ENCODE measurements at regions of chr10 and their contacts with region 1.

Region 1: GRCh38 chr10:69639291-69640195 is 9.5 kb downstream of the FAM241B start:
- DNase-seq: peak; percentile 80
- ATAC-seq: peak; percentile 75
- H3K4me3 Mint-ChIP-seq: no peak overlapping the region
- H3K27ac Mint-ChIP-seq: no peak overlapping the region
- H3K4me1 Mint-ChIP-seq: no peaks in the 10 kb centered on the region
- H3K27me3 Mint-ChIP-seq: no peaks in the 10 kb centered on the region
- CTCF ChIP-seq: peak; percentile 88

Region 2: GRCh38 chr10:69425511-69426298 is 213.8 kb before region 1 on chr10:
- CTCF ChIA-PET with region 1: no interaction called
- POLR2A ChIA-PET with region 1: no interaction called
- intact Hi-C with region 1: loop called (anchors 10 kb)
- DNase-seq: no peak
- ATAC-seq: peak; percentile 21
- H3K4me3 Mint-ChIP-seq: no peak overlapping the region
- H3K27ac Mint-ChIP-seq: no peak overlapping the region
- H3K4me1 Mint-ChIP-seq: peaks cover 37% of the 10 kb centered on the region
- H3K27me3 Mint-ChIP-seq: no peaks in the 10 kb centered on the region
- CTCF ChIP-seq: no peak

Region 3: DNA sequence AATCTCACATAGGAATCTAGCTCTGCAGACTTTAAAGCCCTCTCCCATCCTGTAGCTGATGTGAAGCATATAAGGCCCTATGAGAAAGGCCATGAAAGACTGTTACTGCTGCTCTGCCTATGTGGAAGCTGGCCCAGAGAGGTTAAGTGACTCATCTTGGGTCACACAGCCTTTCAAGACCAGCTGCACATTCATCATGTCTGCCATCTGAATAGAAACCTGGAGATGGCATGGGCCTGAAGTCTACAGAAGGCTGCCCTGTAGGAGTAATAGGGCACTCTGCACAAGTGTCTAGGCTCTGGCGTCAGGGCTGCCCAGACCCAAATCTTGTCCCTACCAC is 102.8 kb after region 1 on chr10:
- CTCF ChIA-PET with region 1: no interaction called
- POLR2A ChIA-PET with region 1: no interaction called
- intact Hi-C with region 1: no loop called
- DNase-seq: no peak
- ATAC-seq: no peak
- H3K4me3 Mint-ChIP-seq: no peak overlapping the region
- H3K27ac Mint-ChIP-seq: no peak overlapping the region
- H3K4me1 Mint-ChIP-seq: no peaks in the 10 kb centered on the region
- H3K27me3 Mint-ChIP-seq: peaks cover 7% of the 10 kb centered on the region
- CTCF ChIP-seq: no peak